OCI-LY7 (cell line): ENCODE measurements at regions of chrX and their contacts with region 1.

Region 1: DNA sequence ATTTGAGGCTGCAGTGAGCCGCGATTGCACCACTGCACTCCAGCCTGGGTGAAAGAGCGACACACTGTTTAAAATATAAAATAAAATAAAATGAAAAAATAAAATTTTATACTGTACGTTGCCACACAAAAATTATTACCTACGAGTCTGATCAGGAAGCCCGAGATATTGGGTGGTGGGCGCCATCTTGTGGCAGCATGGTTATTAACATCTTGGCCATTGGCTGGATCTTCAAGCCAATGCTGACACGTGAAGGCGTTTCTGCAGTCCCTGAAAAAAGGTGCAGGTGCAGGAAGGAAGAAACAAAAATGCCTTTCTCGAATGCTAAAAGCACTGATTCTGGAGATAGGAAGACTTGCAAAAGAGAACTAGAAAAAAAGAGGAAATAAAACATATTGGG is 4.9 kb upstream of the TLR8 start:
- DNase-seq: peak; percentile 70
- H3K4me3 ChIP-seq: no peak overlapping the region
- H3K27ac ChIP-seq: no peak overlapping the region
- H3K4me1 ChIP-seq: no peaks in the 10 kb centered on the region
- CTCF ChIP-seq: peak; percentile 76

Region 2: DNA sequence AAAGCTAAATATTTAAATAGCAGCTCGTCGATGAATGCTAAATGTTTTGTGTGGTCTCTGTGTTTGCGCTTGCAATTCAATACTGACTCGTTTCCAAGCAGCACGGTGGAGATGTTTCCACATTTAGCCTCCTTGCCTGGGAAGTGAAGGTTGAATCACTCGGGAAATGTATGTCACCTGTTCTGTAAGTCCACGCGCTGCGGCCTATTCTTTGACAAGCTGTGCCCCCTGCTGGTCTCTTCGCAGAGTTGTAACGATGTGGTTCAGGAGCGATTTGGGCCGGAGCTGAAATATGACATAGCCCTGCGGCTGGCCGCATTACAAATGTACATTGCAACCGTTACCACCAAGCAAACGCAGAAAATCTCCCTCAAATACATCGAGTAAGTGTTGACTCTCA is 199.9 kb before region 1 on chrX:
- CTCF ChIA-PET with region 1: no interaction called
- POLR2A ChIA-PET with region 1: no interaction called
- intact Hi-C with region 1: loop called (anchors 2 kb)
- DNase-seq: peak; percentile 64
- H3K4me3 ChIP-seq: no peak overlapping the region
- H3K27ac ChIP-seq: no peak overlapping the region
- H3K4me1 ChIP-seq: no peaks in the 10 kb centered on the region
- CTCF ChIP-seq: peak; percentile 77